Posterior vena cava (tissue), 2 donors: ENCODE measurements at regions of chr4 and their contacts with region 1.

Region 1: GRCh38 chr4:149223659-149224058 is 592.0 kb downstream of the IQCM start:
- DNase-seq: no peak

Region 2: DNA sequence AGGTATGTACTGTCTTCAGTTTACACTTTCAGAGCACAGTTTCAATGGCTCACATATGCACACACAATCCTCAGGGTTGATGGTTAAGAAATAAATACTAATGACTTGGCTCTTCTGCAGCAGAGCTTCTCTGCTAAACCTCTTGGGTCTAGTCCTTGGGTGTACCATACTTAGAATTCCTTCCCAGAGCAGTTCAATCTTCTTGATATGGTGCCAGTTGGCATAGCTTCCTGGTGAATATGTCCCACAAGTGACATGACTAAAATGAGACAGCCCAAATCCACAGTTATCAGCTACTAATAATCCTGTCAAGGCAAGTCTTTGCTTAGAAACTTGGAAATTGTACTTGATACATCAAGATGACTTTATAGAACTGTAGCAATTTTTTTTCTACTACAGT is 62.4 kb before region 1 on chr4:
- intact Hi-C with region 1: loop called in 1 of 2 experiments (anchors 2 kb)
- DNase-seq: no peak